K562 (cell line): ENCODE measurements at regions of chrX and their contacts with region 1.

Region 1: DNA sequence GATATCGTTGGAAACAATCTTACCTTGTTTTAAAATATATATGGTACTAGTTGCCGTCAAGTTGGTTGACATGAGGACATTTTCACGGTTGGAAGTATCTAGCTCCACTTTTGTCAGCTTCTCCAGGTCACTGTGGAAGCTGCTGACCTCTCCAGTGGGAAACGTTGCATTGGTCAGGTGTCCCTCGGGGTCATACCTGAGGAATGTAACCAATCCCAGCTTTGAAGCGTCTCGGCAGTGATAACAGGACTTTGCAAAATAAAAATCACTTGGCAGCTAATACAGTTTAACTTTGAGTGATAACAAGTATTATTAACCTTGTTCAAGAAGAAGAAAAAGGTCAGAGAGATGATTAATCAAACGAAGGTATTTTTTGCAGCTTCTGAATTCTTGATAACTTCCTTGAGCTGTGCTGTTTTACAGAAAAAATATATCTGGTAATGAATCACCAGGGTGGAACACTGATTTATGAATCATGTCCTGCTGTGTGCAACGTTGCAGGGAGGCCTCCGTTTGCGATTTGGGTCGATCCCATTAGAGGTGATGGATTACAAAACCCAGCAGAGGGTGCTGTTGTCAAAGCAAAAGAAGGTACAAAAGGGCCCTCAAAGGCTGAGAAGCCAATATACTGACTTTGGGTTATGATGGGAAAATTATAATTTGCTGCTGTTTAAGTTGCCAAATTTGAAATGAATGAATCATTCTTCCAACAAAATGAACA is 60.1 kb downstream of the SH2D1A start:
- DNase-seq: peak; percentile 38 to 71 (median 56)
- ATAC-seq: peak; percentile 95
- H3K4me3 ChIP-seq: no peak overlapping the region
- H3K27ac ChIP-seq: no peak overlapping the region
- H3K4me1 ChIP-seq: no peaks in the 10 kb centered on the region; a peak in 1 of 5 replicates
- H3K27me3 ChIP-seq: no peaks in the 10 kb centered on the region
- CTCF ChIP-seq: peak; percentile 53 to 69 (median 63)
- EP300 ChIP-seq: no peak
- POLR2A ChIP-seq: no peak
- RAD21 ChIP-seq: peak; percentile 81 to 86

Region 2: GRCh38 chrX:124358800-124359383 is 47.6 kb before region 1 on chrX:
- CTCF ChIA-PET with region 1: no interaction called
- POLR2A ChIA-PET with region 1: no interaction called
- in situ Hi-C with region 1: no loop called
- intact Hi-C with region 1: no loop called
- DNase-seq: no peak
- ATAC-seq: no peak
- H3K4me3 ChIP-seq: no peak overlapping the region
- H3K27ac ChIP-seq: no peak overlapping the region
- H3K4me1 ChIP-seq: peaks cover 3 to 5% of the 10 kb centered on the region in 2 experiments; a peak in 3 of 5 replicates
- H3K27me3 ChIP-seq: no peaks in the 10 kb centered on the region
- CTCF ChIP-seq: no peak
- EP300 ChIP-seq: no peak
- POLR2A ChIP-seq: no peak
- RAD21 ChIP-seq: no peak

Region 3: GRCh38 chrX:124863303-124863702 is 456.8 kb after region 1 on chrX:
- CTCF ChIA-PET with region 1: no interaction called
- POLR2A ChIA-PET with region 1: no interaction called
- in situ Hi-C with region 1: no loop called
- intact Hi-C with region 1: loop called (anchors 5 kb)
- DNase-seq: peak in 1 of 4 experiments; percentile 5
- ATAC-seq: peak; percentile 82
- H3K4me3 ChIP-seq: no peak overlapping the region
- H3K27ac ChIP-seq: no peak overlapping the region
- H3K4me1 ChIP-seq: peaks cover 0 to 6% of the 10 kb centered on the region in 2 experiments; a peak in 2 of 5 replicates
- H3K27me3 ChIP-seq: no peaks in the 10 kb centered on the region
- CTCF ChIP-seq: peak in 1 of 3 experiments; percentile 14; a peak in 1 of 6 replicates
- EP300 ChIP-seq: no peak
- POLR2A ChIP-seq: no peak
- RAD21 ChIP-seq: no peak

Region 4: GRCh38 chrX:125436855-125437254 is 1030.4 kb after region 1 on chrX:
- CTCF ChIA-PET with region 1: no interaction called
- POLR2A ChIA-PET with region 1: no interaction called
- in situ Hi-C with region 1: no loop called
- intact Hi-C with region 1: loop called (anchors 5 kb)
- DNase-seq: peak in 3 of 4 experiments; percentile 8 to 67 (median 10)
- ATAC-seq: peak; percentile 84
- H3K4me3 ChIP-seq: no peak overlapping the region
- H3K27ac ChIP-seq: no peak overlapping the region
- H3K4me1 ChIP-seq: peaks cover 0 to 13% of the 10 kb centered on the region in 2 experiments; a peak in 3 of 5 replicates
- H3K27me3 ChIP-seq: no peaks in the 10 kb centered on the region
- CTCF ChIP-seq: peak; percentile 44 to 57 (median 51)
- EP300 ChIP-seq: no peak
- POLR2A ChIP-seq: no peak
- RAD21 ChIP-seq: peak; percentile 42 to 80; a peak in 3 of 4 replicates